ENCODE measurements at regions of chr5 and their contacts with region 1.

Region 1: GRCh38 chr5:88695931-88696330 is 187.1 kb downstream of the MEF2C start:
- DNase-seq: no peak
- ATAC-seq: no peak
- H3K4me3 ChIP-seq: no peak overlapping the region
- H3K4me3 Mint-ChIP-seq: no peak overlapping the region
- H3K27ac ChIP-seq: no peak overlapping the region
- H3K27ac Mint-ChIP-seq: no peak overlapping the region
- H3K4me1 ChIP-seq: peaks cover 0 to 11% of the 10 kb centered on the region in 2 experiments
- H3K4me1 Mint-ChIP-seq: peaks cover 4 to 17% (median 10%) of the 10 kb centered on the region in 3 donors
- H3K27me3 ChIP-seq: peaks cover 30 to 44% of the 10 kb centered on the region in 2 experiments
- H3K27me3 Mint-ChIP-seq: peaks cover 78 to 84% of the 10 kb centered on the region in 2 donors

Region 2: DNA sequence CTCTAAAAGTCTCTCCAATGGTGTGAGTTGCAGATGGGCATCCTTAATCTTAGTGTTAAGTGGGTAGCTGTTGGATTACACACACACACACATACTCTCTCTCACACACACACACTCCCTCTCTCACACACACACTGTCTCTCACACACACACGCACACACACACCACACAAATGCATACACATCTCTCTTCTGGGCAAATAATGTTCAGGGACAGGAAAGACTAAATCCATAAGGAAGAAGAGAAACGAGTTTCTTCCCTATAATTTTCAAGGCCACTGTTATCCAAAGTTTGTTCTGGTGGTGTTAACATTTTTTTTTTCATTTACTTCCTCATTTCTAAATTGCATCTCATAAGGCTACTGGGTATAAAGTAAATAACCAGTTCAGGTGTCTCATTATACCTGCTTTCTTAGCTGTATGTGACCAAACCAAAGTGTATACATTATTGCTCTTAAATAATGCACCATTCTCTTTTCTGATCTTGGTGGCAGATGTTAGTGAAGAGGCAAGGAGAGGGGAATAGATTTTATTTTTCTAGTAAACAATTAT is 1260.7 kb before region 1 on chr5:
- CTCF ChIA-PET with region 1: no interaction called
- POLR2A ChIA-PET with region 1: interaction called in 1 of 2 experiments, 13 read pairs
- DNase-seq: no peak
- ATAC-seq: no peak
- H3K4me3 ChIP-seq: no peak overlapping the region
- H3K4me3 Mint-ChIP-seq: no peak overlapping the region
- H3K27ac ChIP-seq: no peak overlapping the region
- H3K27ac Mint-ChIP-seq: no peak overlapping the region
- H3K4me1 ChIP-seq: no peaks in the 10 kb centered on the region
- H3K4me1 Mint-ChIP-seq: no peaks in the 10 kb centered on the region
- H3K27me3 ChIP-seq: peaks cover 0 to 3% of the 10 kb centered on the region in 2 experiments
- H3K27me3 Mint-ChIP-seq: peaks cover 10 to 17% of the 10 kb centered on the region in 2 donors

Region 3: GRCh38 chr5:88281322-88281721 is 414.6 kb before region 1 on chr5:
- CTCF ChIA-PET with region 1: no interaction called
- POLR2A ChIA-PET with region 1: no interaction called
- DNase-seq: no peak
- ATAC-seq: no peak
- H3K4me3 ChIP-seq: no peak overlapping the region
- H3K4me3 Mint-ChIP-seq: no peak overlapping the region
- H3K27ac ChIP-seq: no peak overlapping the region
- H3K27ac Mint-ChIP-seq: no peak overlapping the region
- H3K4me1 ChIP-seq: no peaks in the 10 kb centered on the region
- H3K4me1 Mint-ChIP-seq: no peaks in the 10 kb centered on the region
- H3K27me3 ChIP-seq: no peaks in the 10 kb centered on the region
- H3K27me3 Mint-ChIP-seq: no peaks in the 10 kb centered on the region